CD14-positive monocyte (primary cell): ENCODE measurements at regions of chr19 and their contacts with region 1.

Region 1: GRCh38 chr19:41883821-41884733 is 1.1 kb downstream of the ARHGEF1 start:
- DNase-seq: peak; percentile 85 to 91 (median 86)
- H3K4me3 ChIP-seq: peak overlapping the region; percentile 75 to 98 (median 98)
- H3K4me3 Mint-ChIP-seq: peak overlapping the region; percentile 92 to 97
- H3K27ac ChIP-seq: peak overlapping the region; percentile 86
- H3K27ac Mint-ChIP-seq: peak overlapping the region; percentile 89 to 98 (median 95)
- H3K4me1 ChIP-seq: peaks cover 53 to 72% of the 10 kb centered on the region in 2 donors
- H3K4me1 Mint-ChIP-seq: peaks cover 57% of the 10 kb centered on the region
- H3K27me3 ChIP-seq: no peaks in the 10 kb centered on the region
- H3K27me3 Mint-ChIP-seq: peaks cover 0 to 1% (median 1%) of the 10 kb centered on the region in 3 donors
- CTCF ChIP-seq: no peak

Region 2: DNA sequence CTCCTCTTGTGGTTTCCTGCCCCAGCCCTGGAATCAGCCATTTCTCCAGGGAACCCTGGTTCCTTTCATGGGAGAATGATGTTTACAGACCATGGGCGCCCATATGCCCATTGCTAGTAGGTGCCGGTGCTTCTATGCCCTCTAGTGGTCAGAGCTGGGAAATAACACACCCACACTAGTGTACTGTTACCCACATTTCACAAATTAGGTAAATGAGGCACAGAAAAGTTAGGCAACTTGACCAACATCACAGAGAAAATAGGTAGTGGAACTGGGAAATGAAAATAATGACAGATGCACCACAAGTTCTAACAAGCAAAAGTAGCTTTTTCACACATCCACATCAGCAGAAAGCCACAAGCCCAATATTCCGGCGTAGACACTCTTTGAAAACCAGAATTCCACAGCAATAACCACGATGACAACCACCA is 89.0 kb before region 1 on chr19:
- intact Hi-C with region 1: no loop called
- DNase-seq: peak; percentile 67 to 85 (median 84)
- H3K4me3 ChIP-seq: no peak overlapping the region
- H3K4me3 Mint-ChIP-seq: no peak overlapping the region
- H3K27ac ChIP-seq: peak overlapping the region; percentile 61 to 63
- H3K27ac Mint-ChIP-seq: peak overlapping the region; percentile 79 to 92 (median 85)
- H3K4me1 ChIP-seq: peaks cover 50 to 56% of the 10 kb centered on the region in 2 donors
- H3K4me1 Mint-ChIP-seq: peaks cover 55% of the 10 kb centered on the region
- H3K27me3 ChIP-seq: peaks cover 2% of the 10 kb centered on the region in 2 donors
- H3K27me3 Mint-ChIP-seq: peaks cover 13 to 18% (median 15%) of the 10 kb centered on the region in 3 donors
- CTCF ChIP-seq: peak; percentile 98

Region 3: DNA sequence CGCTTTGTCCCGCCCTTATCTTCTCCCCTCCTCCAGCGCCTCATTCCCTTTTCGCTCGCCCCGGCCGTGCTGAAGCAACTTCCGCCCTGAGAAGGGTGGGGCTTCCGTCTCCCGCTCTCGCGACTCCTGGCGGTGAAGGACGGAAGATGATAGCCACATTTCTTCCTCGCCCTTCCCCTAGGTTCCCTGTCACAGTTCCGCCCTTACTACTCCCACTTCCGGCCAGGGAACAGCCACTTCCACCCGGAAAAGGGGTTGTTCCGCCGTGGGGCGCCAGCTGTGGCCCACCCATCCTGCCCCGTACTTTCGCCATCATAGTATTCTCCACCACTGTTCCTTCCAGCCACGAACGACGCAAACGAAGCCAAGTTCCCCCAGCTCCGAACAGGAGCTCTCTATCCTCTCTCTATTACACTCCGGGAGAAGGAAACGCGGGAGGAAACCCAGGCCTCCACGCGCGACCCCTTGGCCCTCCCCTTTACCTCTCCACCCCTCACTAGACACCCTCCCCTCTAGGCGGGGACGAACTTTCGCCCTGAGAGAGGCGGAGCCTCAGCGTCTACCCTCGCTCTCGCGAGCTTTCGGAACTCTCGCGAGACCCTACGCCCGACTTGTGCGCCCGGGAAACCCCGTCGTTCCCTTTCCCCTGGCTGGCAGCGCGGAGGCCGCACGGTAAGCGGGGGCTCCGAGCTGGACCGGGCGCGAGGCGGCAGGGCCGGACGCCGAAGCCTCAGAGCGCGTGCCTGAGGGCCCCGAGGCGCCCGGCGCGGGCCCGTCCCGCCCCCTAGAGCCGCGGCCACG is 24.3 kb before region 1 on chr19 and contains the start of gene RPS19:
- intact Hi-C with region 1: loop called (anchors 2 kb)
- DNase-seq: peak; percentile 96 to 99 (median 98)
- H3K4me3 ChIP-seq: peak within 1 kb of the TSS; percentile 59 to 95 (median 68)
- H3K4me3 Mint-ChIP-seq: peak within 1 kb of the TSS; percentile 92 to 100
- H3K27ac ChIP-seq: peak within 1 kb of the TSS; percentile 86 to 90
- H3K27ac Mint-ChIP-seq: peak within 1 kb of the TSS; percentile 99 to 100 (median 100)
- H3K4me1 ChIP-seq: peaks cover 35 to 43% of the 10 kb centered on the region in 2 donors
- H3K4me1 Mint-ChIP-seq: peaks cover 45% of the 10 kb centered on the region
- H3K27me3 ChIP-seq: no peaks in the 10 kb centered on the region
- H3K27me3 Mint-ChIP-seq: peaks cover 0 to 3% (median 2%) of the 10 kb centered on the region in 3 donors
- CTCF ChIP-seq: peak; percentile 87
- polyA plus RNA-seq, gene RPS19: 1,234 to 2,117 (median 1,424) TPM

Region 4: DNA sequence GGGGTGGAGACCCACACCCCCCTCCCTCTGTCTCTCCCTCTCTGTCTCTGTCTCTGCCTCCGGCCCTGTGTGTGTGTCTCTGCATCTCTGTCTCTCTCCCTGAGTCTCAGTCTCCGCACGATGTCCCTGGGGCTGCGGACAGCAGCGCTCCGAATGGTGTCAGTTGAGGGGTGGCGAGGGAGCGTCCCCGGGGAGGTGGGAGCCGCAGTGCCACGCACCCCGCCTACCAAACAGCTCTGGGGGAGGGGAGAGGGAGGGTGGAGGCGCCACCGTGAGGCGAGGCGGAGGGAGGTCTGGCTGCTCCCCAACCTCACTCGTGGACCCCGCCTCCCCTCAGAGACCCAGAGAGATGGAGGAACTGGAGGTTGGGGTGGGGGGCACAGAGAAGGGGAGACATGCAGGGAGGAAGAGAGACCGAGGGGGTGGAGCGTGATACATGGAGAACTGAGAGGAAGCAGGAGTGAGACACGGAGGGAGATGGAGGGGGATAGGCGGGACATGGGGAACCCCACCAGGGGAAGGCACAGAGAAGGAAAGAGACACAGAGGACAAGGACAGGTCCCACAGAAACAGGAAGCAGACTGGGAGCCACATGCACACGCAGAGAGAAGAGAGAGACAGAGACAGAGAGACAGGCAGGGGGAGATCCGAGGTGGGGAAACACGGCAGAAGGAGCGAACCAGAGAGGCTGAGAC is 37.0 kb after region 1 on chr19:
- intact Hi-C with region 1: no loop called
- DNase-seq: peak in 1 of 3 donors; percentile 54
- H3K4me3 ChIP-seq: no peak overlapping the region
- H3K4me3 Mint-ChIP-seq: peak overlapping the region in 1 of 2 donors; percentile 82
- H3K27ac ChIP-seq: no peak overlapping the region
- H3K27ac Mint-ChIP-seq: no peak overlapping the region
- H3K4me1 ChIP-seq: no peaks in the 10 kb centered on the region
- H3K4me1 Mint-ChIP-seq: peaks cover 6% of the 10 kb centered on the region
- H3K27me3 ChIP-seq: peaks cover 25 to 75% of the 10 kb centered on the region in 2 donors
- H3K27me3 Mint-ChIP-seq: peaks cover 0 to 28% (median 18%) of the 10 kb centered on the region in 3 donors
- CTCF ChIP-seq: no peak

Region 5: DNA sequence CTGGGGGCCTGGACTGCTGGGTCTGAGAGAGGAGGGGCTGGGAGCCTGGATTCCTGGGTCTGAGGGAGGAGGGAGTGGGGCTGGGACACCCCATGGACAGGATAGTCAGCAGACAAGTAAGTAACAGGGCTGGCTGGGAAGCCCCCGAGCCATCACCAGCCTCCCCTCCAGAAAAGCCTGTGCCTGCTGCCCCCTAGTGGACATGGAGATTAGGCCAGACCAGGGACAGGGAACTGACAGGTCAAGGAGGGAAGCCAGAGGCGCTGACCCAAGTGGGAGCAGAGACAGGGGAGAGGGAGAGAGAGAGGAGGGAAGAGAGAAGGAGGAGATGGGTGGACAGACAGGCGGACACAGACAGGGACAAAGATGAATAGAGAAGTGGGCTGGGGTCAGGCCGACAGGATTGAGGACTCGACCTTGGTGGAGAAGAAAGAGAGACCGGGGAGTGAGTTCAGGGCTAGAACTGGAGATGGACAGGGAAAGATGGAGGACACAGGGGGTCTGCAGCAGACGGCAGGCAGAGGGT is 50.8 kb after region 1 on chr19:
- intact Hi-C with region 1: loop called in 1 of 2 experiments (anchors 5 kb)
- DNase-seq: peak; percentile 52 to 76 (median 59)
- H3K4me3 ChIP-seq: no peak overlapping the region
- H3K4me3 Mint-ChIP-seq: peak overlapping the region in 1 of 2 donors; percentile 79
- H3K27ac ChIP-seq: no peak overlapping the region
- H3K27ac Mint-ChIP-seq: peak overlapping the region in 1 of 7 donors; percentile 29
- H3K4me1 ChIP-seq: peaks cover 4 to 5% of the 10 kb centered on the region in 2 donors
- H3K4me1 Mint-ChIP-seq: peaks cover 14% of the 10 kb centered on the region
- H3K27me3 ChIP-seq: peaks cover 15 to 55% of the 10 kb centered on the region in 2 donors
- H3K27me3 Mint-ChIP-seq: peaks cover 32 to 71% (median 56%) of the 10 kb centered on the region in 3 donors
- CTCF ChIP-seq: peak; percentile 91

Region 6: DNA sequence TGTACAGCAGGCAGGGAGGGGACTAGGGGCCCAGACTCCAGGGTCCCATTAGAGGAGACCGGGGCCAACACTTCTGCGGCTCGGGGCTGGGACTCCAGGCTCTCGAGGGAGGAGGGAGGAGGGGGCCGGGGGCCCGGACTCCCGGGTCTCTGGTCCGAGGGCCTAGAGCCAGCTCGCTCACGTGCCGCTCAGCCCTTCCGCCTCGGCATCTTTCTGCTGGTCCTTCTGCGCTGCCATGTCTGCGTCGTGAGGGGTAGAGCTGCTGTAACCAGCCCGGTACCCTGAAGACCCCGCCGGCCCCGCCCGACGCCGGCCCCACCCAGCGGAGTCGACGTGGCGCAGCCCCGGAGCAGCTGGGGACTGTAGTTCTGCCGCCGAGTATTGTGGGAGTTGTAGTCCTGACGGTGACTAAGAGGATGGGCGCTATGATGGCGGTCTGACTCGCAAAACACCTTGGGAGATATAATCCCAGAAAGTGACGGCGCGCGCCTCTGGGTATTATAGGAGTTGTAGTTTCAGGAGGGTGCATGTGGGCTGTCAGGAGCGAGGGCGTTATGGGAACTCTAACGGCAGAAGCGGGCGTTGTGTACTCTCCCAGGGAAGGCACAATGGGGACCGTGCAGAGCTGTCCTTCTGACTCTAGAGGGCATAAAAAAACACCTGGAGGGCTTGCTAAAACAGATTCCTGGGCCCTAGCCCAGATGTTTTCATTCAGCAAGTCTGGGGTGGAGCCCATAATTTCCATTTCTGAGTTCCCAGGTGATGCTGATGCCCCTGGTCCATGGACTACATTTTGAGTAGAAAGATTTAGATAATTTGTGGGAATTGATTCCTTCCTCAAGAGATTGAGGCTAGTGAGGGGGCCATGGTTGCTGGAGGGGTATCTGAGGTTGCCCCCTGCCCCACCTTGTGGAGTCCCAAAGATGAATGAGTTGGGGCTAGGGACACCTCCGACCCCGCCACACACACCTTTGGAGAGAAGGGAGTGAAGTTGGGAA is 75.3 kb after region 1 on chr19 and contains the start of gene RABAC1:
- intact Hi-C with region 1: loop called in 1 of 2 experiments (anchors 5 kb)
- DNase-seq: peak; percentile 70 to 84 (median 77)
- H3K4me3 ChIP-seq: peak within 1 kb of the TSS; percentile 66 to 91 (median 91)
- H3K4me3 Mint-ChIP-seq: peak within 1 kb of the TSS; percentile 82 to 93
- H3K27ac ChIP-seq: peak within 1 kb of the TSS; percentile 70 to 84
- H3K27ac Mint-ChIP-seq: peak within 1 kb of the TSS; percentile 71 to 93 (median 87)
- H3K4me1 ChIP-seq: peaks cover 21 to 25% of the 10 kb centered on the region in 2 donors
- H3K4me1 Mint-ChIP-seq: peaks cover 23% of the 10 kb centered on the region
- H3K27me3 ChIP-seq: no peaks in the 10 kb centered on the region
- H3K27me3 Mint-ChIP-seq: peaks cover 0 to 6% (median 1%) of the 10 kb centered on the region in 3 donors
- CTCF ChIP-seq: no peak
- polyA plus RNA-seq, gene RABAC1: 126 to 234 (median 202) TPM